PC-9 (cell line): ENCODE measurements at regions of chr12 and their contacts with region 1.

Region 1: GRCh38 chr12:52442600-52443061 is 8.5 kb upstream of the KRT75 start:
- DNase-seq: peak; percentile 82 to 92
- H3K4me3 ChIP-seq: peak overlapping the region; percentile 17; the same call in 1 of the 2 replicates
- H3K27ac ChIP-seq: peak overlapping the region; percentile 97
- H3K4me1 ChIP-seq: peaks cover 74% of the 10 kb centered on the region
- H3K27me3 ChIP-seq: no peaks in the 10 kb centered on the region
- CTCF ChIP-seq: no peak; the same call in 1 of the 2 replicates

Region 2: DNA sequence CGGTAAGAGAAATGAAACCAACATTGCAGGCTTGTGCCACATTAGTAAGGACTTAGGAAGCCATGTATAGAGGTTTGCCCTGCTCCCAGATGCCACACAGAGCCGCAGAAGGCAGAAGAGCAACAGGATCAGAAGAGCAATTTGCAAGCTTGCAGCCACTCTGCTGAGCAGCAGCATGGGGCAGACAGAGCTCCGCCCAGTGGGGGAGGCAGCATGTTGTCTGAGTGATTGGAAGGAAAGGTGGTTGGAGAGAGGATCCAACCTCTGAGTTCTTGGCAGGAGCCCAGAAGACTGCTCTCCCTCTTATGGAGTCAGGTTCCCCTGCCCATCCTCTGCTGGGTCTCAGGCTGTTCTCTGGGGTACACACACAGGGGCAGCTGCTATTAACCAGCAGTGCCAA is 52.8 kb after region 1 on chr12:
- CTCF ChIA-PET with region 1: interaction called, 5 read pairs
- POLR2A ChIA-PET with region 1: interaction called, 6 read pairs
- intact Hi-C with region 1: loop called (anchors 2 kb)
- DNase-seq: peak in 1 of 2 experiments; percentile 51
- H3K4me3 ChIP-seq: no peak overlapping the region
- H3K27ac ChIP-seq: no peak overlapping the region
- H3K4me1 ChIP-seq: peaks cover 41% of the 10 kb centered on the region
- H3K27me3 ChIP-seq: no peaks in the 10 kb centered on the region
- CTCF ChIP-seq: no peak